Activated CD8-positive, alpha-beta T cell treated with anti-CD3 and anti-CD28 coated beads for 36 hours (primary cell): ENCODE measurements at regions of chr20 and their contacts with region 1.

Region 1: DNA sequence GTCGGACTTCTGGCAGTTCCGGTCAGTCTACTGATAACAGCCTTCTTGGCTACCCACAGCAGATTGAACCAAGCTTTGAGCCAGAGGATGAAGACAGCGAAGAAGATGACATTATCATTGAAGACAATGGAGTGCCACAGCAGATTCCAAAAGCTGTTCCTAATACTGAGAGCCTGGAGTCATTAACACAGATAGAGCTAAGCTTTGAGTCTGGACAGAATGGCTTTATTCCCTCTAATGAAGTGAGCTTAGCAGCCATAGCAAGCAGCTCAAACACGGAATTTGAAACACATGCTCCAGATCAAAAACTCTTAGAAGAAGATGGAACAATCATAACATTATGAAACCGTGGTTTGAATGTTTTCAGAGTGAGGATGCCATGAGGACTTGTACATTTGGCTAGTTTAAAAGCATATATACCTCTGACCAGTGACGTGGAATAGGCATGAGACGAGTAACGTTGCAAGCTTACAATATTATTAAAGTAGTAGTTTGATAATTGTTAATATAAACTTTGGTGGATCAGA is 18.8 kb downstream of the PARD6B start:
- DNase-seq: no peak
- ATAC-seq: no peak
- H3K4me3 Mint-ChIP-seq: no peak overlapping the region
- H3K27ac Mint-ChIP-seq: no peak overlapping the region
- H3K4me1 Mint-ChIP-seq: peaks cover 20% of the 10 kb centered on the region
- H3K27me3 Mint-ChIP-seq: no peaks in the 10 kb centered on the region
- CTCF ChIP-seq: no peak

Region 2: DNA sequence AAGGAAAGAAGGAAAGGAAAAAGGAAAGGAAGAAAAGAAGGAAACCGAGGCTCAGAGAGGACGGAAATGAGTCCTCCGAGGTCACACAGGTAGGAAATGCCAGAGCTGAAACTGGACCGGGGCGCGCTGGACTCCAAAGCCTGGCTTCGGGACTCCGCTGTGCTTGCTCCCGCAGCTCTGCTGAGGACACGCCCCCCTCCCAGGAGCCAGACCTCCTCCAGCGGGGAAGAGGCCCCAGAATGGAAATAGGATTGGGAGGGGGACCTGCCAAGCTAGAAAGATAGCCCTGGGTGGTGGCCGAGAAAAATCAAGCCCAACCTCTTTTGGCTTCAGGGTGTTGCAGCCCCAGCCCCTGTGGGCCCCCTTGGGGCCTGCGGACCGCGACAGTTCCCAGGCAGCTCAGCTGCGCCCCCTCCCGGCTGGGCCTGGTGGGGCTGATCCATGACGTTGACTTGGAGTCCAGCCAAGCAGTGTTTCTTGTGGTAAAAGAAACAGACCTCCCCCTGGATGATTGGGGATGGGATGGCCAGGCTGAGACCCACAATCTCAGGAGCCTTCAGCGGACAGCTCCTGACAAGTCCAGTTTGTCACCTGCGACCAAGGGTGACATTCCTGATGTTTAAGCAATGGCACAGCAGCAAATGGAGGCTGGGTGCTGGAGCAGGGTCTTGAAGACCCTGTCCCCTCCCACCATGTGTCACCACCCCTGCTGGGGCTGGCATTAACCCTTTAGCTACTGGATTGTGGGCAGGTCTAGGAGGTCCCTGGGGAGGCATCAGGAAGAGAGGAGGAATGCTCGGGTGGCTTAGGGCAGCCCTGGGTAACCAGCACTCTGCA is 114.3 kb before region 1 on chr20:
- CTCF ChIA-PET with region 1: interaction called, 14 read pairs
- POLR2A ChIA-PET with region 1: no interaction called
- intact Hi-C with region 1: no loop called
- DNase-seq: peak; percentile 78
- ATAC-seq: peak; percentile 94
- H3K4me3 Mint-ChIP-seq: no peak overlapping the region
- H3K27ac Mint-ChIP-seq: no peak overlapping the region
- H3K4me1 Mint-ChIP-seq: no peaks in the 10 kb centered on the region
- H3K27me3 Mint-ChIP-seq: no peaks in the 10 kb centered on the region
- CTCF ChIP-seq: peak; percentile 86

Region 3: DNA sequence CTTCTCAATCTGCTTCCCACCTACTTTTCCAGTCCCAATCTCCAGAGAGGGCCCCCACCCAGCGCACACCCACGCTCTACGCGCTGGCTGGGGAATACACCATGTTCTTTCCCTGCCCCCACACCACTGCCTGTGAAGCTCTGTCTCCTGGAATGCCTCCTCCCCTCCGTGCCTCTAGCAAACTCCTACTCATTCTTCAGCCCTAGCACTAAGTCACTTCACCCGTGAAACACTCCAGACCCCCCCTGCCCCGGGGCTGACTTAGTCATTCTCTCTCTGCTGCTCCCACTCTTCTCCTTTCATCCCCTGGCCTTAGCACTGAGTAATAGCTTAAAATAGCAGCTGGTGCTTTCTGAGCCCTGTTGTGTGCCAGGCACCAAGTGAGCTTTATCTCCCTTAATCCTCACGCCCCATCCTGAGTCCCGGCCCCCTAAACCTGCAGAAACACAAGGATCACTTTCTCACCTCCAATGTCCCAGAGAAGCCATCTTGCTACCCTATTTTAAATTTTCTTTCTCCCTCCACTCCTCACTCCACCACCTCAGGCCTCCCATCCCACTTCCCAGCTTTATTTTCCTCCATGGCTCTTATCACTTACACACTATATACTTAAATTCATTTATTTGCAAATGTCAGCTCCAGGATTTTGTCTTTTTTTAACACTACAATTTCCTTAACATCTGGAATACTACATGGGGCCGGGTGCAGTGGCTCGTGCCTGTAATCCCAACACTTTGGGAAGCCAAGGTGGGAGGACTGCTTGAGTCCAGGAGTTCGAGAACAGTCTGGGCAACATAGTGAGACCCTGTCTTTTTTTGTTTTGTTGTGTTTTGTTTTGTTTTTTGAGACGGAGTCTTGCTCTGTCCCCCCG is 25.1 kb before region 1 on chr20:
- CTCF ChIA-PET with region 1: interaction called, 13 read pairs
- POLR2A ChIA-PET with region 1: interaction called, 3 read pairs
- intact Hi-C with region 1: no loop called
- DNase-seq: peak; percentile 91
- ATAC-seq: peak; percentile 99
- H3K4me3 Mint-ChIP-seq: no peak overlapping the region
- H3K27ac Mint-ChIP-seq: no peak overlapping the region
- H3K4me1 Mint-ChIP-seq: peaks cover 10% of the 10 kb centered on the region
- H3K27me3 Mint-ChIP-seq: no peaks in the 10 kb centered on the region
- CTCF ChIP-seq: no peak

Region 4: DNA sequence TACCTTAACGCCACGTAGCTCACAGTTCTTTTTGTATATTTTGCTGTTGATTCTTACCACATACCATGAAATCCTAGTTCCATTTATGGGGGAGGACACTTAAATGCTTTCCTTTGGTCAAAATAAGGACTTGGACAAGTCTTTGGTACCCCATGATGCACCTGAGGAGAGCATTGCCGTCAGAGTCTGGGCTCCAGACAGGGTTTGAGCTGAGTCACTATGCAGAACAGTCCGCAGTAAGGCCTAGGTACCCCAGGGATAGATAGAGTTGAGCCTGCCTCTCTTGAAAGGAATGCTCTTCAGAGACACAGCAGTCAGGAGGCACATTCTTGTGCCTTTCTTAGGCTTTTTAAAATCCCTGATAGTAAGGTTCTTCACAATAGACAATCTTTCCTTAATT is 12.9 kb before region 1 on chr20:
- CTCF ChIA-PET with region 1: interaction called, 27 read pairs
- POLR2A ChIA-PET with region 1: no interaction called
- intact Hi-C with region 1: loop called (anchors 2 kb)
- DNase-seq: no peak
- ATAC-seq: no peak
- H3K4me3 Mint-ChIP-seq: no peak overlapping the region
- H3K27ac Mint-ChIP-seq: no peak overlapping the region
- H3K4me1 Mint-ChIP-seq: peaks cover 34% of the 10 kb centered on the region
- H3K27me3 Mint-ChIP-seq: no peaks in the 10 kb centered on the region
- CTCF ChIP-seq: no peak

Region 5: DNA sequence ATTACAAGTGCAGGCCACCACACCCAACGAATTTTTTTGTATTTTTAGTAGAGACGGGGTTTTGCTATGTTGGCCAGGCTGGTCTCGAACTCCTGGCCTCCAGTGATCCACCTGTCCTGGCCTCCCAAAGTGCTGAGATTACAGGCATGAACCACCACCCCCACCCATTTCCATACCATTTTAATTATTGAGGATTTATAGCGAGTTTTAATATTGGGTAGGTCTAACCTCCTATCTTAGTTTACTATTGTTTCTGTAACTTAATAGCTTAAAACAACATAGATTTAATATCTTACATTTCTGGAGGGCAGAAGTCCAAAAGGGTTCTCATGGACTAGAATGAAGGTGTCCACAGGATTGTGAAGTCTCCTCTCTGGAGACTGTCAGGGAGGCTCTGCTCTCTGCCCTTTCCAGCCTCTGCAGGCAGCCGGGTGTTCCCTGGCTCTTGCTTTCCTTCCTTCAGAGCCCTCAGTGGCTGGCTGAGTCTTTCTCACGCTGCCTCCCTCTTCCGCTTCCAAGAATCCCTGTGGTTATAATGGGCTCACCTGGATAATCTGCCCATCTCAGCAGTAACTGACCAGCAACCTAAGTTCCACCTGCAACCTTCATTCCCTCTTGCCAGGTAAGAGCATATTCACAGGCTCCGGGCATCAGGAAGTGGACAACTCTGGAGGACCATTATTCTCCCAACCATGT is 26.1 kb after region 1 on chr20:
- CTCF ChIA-PET with region 1: interaction called, 12 read pairs
- POLR2A ChIA-PET with region 1: no interaction called
- intact Hi-C with region 1: no loop called
- DNase-seq: no peak
- ATAC-seq: no peak
- H3K4me3 Mint-ChIP-seq: no peak overlapping the region
- H3K27ac Mint-ChIP-seq: no peak overlapping the region
- H3K4me1 Mint-ChIP-seq: peaks cover 6% of the 10 kb centered on the region
- H3K27me3 Mint-ChIP-seq: no peaks in the 10 kb centered on the region
- CTCF ChIP-seq: no peak